ENCODE measurements at regions of chr1 and their contacts with region 1.

Region 1: DNA sequence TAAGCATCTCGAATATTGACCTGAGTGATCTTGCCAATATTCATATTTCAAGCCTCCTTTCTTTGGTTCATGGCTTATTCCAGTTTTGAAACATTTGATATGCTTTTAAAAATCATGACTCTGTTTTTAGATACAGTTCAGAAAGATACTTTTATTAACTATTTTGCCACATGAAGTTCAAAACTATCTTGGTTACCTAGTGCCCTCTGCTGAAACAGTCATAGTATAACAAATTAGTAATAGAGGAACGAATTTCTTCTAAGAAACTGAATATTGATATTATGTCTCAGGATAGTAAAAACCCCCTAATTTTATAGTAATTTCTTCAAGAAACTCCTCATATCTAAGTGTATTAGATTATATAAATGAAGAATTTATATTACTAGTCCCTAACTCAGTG is 52.6 kb upstream of the RC3H1 start:
- DNase-seq: no peak
- ATAC-seq: peak in 1 of 4 donors; percentile 53
- H3K4me3 ChIP-seq: no peak overlapping the region
- H3K27ac ChIP-seq: no peak overlapping the region
- H3K4me1 ChIP-seq: no peaks in the 10 kb centered on the region
- H3K27me3 ChIP-seq: no peaks in the 10 kb centered on the region
- CTCF ChIP-seq: no peak

Region 2: GRCh38 chr1:173853074-173853473 is 221.7 kb before region 1 on chr1:
- intact Hi-C with region 1: loop called in 1 of 3 experiments (anchors 10 kb)
- DNase-seq: no peak
- ATAC-seq: no peak
- H3K4me3 ChIP-seq: no peak overlapping the region
- H3K27ac ChIP-seq: no peak overlapping the region
- H3K4me1 ChIP-seq: no peaks in the 10 kb centered on the region
- H3K27me3 ChIP-seq: no peaks in the 10 kb centered on the region
- CTCF ChIP-seq: no peak